Activated naive CD4-positive, alpha-beta T cell treated with anti-CD3 and anti-CD28 coated beads for 36 hours (primary cell): ENCODE measurements at regions of chr2 and their contacts with region 1.

Region 1: DNA sequence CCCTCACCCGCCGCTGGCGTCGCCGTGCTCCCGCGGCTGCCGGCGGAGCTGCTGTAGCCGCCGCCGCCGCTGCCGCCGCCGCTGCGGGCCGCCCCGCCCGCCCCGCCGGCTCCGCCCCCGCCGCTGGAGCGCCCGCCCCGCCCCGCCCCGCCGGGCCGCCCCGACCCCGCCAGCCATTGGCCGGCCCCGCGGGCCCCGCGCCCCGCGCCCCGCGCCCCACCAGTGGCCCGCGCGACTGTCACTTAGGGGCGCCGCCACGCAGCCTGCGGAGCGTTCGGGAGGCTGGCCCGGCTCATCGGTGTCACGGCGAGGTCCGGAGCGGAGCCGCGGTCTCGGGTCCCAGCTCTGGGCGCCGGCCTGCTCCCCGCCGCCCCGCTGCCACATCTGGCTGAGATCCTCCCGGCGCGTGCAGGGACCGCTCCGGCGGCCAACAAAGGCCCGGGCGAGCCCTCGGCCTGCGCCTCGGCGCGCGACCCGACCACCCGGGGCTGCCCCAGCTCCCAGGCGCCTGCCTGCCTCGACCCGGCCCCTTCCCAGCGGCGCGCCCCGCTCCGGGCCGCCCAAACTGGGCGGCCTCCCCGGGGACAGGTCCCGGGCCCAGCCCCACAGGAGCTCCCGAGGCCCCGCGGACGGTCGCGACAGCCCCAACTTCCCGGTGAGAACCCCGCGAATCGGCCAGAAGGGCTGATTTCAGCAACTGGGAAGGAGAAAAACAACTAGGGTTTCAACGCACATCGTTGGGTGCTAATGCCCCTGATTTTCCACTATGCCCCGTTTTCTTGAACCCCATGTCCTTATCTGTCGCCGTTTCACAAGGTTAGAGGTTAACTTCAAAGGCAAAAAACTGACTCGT is at the start of gene MGAT4A:
- DNase-seq: peak; percentile 81
- H3K4me3 Mint-ChIP-seq: peak within 1 kb of the TSS; percentile 89
- H3K27ac Mint-ChIP-seq: peak within 1 kb of the TSS; percentile 95
- H3K4me1 Mint-ChIP-seq: peaks cover 60% of the 10 kb centered on the region
- H3K27me3 Mint-ChIP-seq: no peaks in the 10 kb centered on the region
- total RNA-seq, gene MGAT4A: 85.5 to 87.5 TPM

Region 2: GRCh38 chr2:98649135-98649991 is 81.9 kb before region 1 on chr2:
- CTCF ChIA-PET with region 1: interaction called, 14 read pairs
- intact Hi-C with region 1: no loop called
- DNase-seq: peak; percentile 92
- H3K4me3 Mint-ChIP-seq: no peak overlapping the region
- H3K27ac Mint-ChIP-seq: peak overlapping the region; percentile 83
- H3K4me1 Mint-ChIP-seq: peaks cover 56% of the 10 kb centered on the region
- H3K27me3 Mint-ChIP-seq: no peaks in the 10 kb centered on the region

Region 3: GRCh38 chr2:98692090-98693054 is 38.9 kb before region 1 on chr2:
- CTCF ChIA-PET with region 1: interaction called, 10 read pairs
- intact Hi-C with region 1: loop called (anchors 1 kb)
- DNase-seq: peak; percentile 39
- H3K4me3 Mint-ChIP-seq: peak overlapping the region; percentile 67
- H3K27ac Mint-ChIP-seq: peak overlapping the region; percentile 97
- H3K4me1 Mint-ChIP-seq: peaks cover 83% of the 10 kb centered on the region
- H3K27me3 Mint-ChIP-seq: no peaks in the 10 kb centered on the region

Region 4: GRCh38 chr2:98757904-98758421 is 26.7 kb after region 1 on chr2:
- CTCF ChIA-PET with region 1: interaction called, 10 read pairs
- intact Hi-C with region 1: loop called (anchors 1 kb)
- DNase-seq: peak; percentile 76
- H3K4me3 Mint-ChIP-seq: peak overlapping the region; percentile 59
- H3K27ac Mint-ChIP-seq: peak overlapping the region; percentile 86
- H3K4me1 Mint-ChIP-seq: peaks cover 52% of the 10 kb centered on the region
- H3K27me3 Mint-ChIP-seq: no peaks in the 10 kb centered on the region

Region 5: DNA sequence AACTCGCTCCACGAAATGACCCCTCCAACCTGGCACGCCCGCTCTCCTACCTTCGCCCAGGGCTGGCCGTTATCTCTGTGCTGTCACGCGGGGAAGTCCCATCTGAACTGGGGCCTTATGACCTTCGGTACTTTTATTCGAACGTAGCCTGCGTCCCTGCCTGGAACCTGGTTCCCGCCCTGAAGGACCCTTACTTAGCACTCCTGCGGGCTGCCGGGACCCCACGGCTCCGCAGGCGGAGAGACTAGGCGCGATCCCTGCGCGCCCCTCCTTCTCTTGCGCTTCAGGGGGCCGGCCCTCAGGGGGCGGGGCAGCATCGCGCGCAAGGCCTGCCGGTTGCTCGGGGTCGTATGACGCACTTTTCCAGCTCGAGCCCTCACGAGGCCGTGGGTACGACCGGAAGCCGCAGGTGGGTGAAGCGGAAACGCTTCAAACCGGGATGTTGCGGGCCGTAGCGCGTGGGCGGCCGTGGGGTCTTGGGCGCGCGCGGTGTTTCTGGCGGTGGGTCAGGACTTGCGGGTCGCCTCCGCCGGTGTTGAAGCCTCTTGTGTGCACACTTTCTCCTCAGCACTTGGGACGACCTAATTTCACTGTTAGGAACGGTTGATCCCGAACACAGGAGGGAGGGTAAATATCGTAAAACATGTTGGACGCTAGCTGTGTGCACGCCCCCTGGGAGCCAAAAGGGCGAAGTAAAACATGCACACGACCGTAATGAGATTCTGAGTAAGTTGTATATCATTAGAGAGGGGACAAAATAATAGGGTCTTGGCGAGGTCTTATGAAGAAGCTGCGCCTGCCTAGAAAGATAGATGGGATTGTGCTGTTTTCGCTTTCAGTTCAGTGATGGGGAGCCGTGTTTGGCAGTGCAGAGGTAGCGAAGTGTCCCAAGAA is 423.6 kb after region 1 on chr2 and contains the starts of genes LIPT1 and TSGA10:
- CTCF ChIA-PET with region 1: no interaction called
- intact Hi-C with region 1: loop called (anchors 10 kb)
- DNase-seq: peak; percentile 95
- H3K4me3 Mint-ChIP-seq: no peak within 1 kb of the TSS
- H3K27ac Mint-ChIP-seq: no peak within 1 kb of the TSS
- H3K4me1 Mint-ChIP-seq: peaks cover 39% of the 10 kb centered on the region
- H3K27me3 Mint-ChIP-seq: no peaks in the 10 kb centered on the region
- total RNA-seq, gene LIPT1: 7.0 to 8.1 TPM
- total RNA-seq, gene TSGA10: 7.2 to 8.9 TPM